Endothelial cell of umbilical vein (primary cell): ENCODE measurements at regions of chr6 and their contacts with region 1.

Region 1: GRCh38 chr6:31114970-31115849 is 610 bp downstream of the PSORS1C1 start:
- DNase-seq: peak; percentile 51
- H3K4me3 ChIP-seq: peak overlapping the region in 1 of 3 experiments; percentile 3
- H3K27ac ChIP-seq: peak overlapping the region; percentile 51
- H3K4me1 ChIP-seq: peaks cover 21% of the 10 kb centered on the region
- H3K27me3 ChIP-seq: peaks cover 4 to 6% of the 10 kb centered on the region in 2 experiments
- CTCF ChIP-seq: peak; percentile 13 to 20
- POLR2A ChIP-seq: no peak

Region 2: GRCh38 chr6:30700340-30700739 is 414.9 kb before region 1 on chr6:
- CTCF ChIA-PET with region 1: no interaction called
- POLR2A ChIA-PET with region 1: no interaction called
- dilution Hi-C with region 1: no loop called
- intact Hi-C with region 1: no loop called
- DNase-seq: no peak
- H3K4me3 ChIP-seq: no peak overlapping the region
- H3K27ac ChIP-seq: no peak overlapping the region
- H3K4me1 ChIP-seq: no peaks in the 10 kb centered on the region
- H3K27me3 ChIP-seq: no peaks in the 10 kb centered on the region
- CTCF ChIP-seq: no peak
- POLR2A ChIP-seq: no peak

Region 3: GRCh38 chr6:31060145-31060544 is 55.1 kb before region 1 on chr6:
- CTCF ChIA-PET with region 1: no interaction called
- POLR2A ChIA-PET with region 1: no interaction called
- dilution Hi-C with region 1: no loop called
- intact Hi-C with region 1: no loop called
- DNase-seq: no peak
- H3K4me3 ChIP-seq: no peak overlapping the region
- H3K27ac ChIP-seq: no peak overlapping the region
- H3K4me1 ChIP-seq: no peaks in the 10 kb centered on the region
- H3K27me3 ChIP-seq: peaks cover 7 to 19% of the 10 kb centered on the region in 2 experiments
- CTCF ChIP-seq: no peak
- POLR2A ChIP-seq: no peak

Region 4: DNA sequence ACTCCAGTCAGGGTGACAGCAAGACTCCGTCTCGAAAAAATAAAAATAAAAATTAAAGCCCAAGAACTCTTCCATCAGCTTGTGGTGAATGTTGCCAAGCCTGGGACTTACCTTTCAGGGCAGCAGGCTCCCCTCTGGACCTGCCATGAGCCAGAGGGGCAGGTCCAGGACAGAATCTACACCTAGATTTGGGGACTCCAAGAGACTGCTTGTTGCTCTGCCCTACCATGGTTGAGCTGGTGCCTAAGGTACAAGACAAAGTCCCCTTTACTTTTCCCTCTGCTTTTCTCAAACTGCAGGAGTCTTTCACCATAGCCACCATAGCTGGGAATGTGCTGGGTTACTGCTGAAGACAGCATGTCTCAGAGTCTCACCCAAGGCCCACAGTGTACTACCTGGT is 12.1 kb before region 1 on chr6:
- CTCF ChIA-PET with region 1: interaction called, 14 read pairs
- POLR2A ChIA-PET with region 1: no interaction called
- dilution Hi-C with region 1: no loop called
- intact Hi-C with region 1: no loop called
- DNase-seq: no peak
- H3K4me3 ChIP-seq: no peak overlapping the region
- H3K27ac ChIP-seq: no peak overlapping the region
- H3K4me1 ChIP-seq: no peaks in the 10 kb centered on the region
- H3K27me3 ChIP-seq: peaks cover 0 to 3% of the 10 kb centered on the region in 2 experiments
- CTCF ChIP-seq: no peak
- POLR2A ChIP-seq: no peak

Region 5: DNA sequence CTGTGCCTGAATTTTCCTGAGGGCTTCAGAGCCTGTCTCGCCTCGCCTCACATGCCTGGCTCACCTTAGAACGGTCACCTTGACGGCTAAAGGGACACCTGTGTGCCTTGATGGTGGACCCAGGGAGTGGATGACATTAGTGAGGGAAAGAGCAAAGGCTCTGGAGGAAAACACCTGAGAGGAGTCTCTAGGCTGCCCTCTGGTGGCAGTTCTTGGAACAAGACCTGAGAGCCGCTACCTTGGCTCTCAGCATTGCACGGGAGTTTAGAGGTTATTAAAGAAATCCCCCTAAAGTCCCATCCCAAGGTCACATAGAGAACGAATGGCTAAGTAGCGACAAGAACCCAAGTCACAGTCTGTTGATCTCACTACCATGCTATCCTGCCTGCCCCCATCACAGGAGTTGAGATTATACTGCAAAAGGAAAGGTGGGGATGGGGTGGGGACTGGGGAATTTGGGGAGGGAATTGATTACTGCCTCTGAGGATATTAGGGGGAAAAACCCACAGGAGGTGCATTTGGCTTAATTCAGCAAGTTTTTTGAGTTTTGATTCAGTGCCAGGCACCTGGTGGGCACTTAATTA is 13.0 kb after region 1 on chr6:
- CTCF ChIA-PET with region 1: interaction called, 71 read pairs
- POLR2A ChIA-PET with region 1: interaction called, 3 read pairs
- dilution Hi-C with region 1: no loop called
- intact Hi-C with region 1: no loop called
- DNase-seq: peak; percentile 47
- H3K4me3 ChIP-seq: no peak overlapping the region
- H3K27ac ChIP-seq: no peak overlapping the region
- H3K4me1 ChIP-seq: peaks cover 23% of the 10 kb centered on the region
- H3K27me3 ChIP-seq: peaks cover 3 to 6% of the 10 kb centered on the region in 2 experiments
- CTCF ChIP-seq: peak; percentile 80 to 89
- POLR2A ChIP-seq: no peak